ENCODE measurements at regions of chr17 and their contacts with region 1.

Region 1: GRCh38 chr17:31015639-31016038 is 44.8 kb downstream of the RNF135 start:
- DNase-seq: no peak
- H3K4me3 Mint-ChIP-seq: no peak overlapping the region
- H3K27ac Mint-ChIP-seq: no peak overlapping the region
- H3K4me1 Mint-ChIP-seq: no peaks in the 10 kb centered on the region
- H3K27me3 Mint-ChIP-seq: no peaks in the 10 kb centered on the region

Region 2: GRCh38 chr17:31216053-31216751 is 200.6 kb after region 1 on chr17:
- CTCF ChIA-PET with region 1: interaction called, 11 read pairs
- POLR2A ChIA-PET with region 1: no interaction called
- intact Hi-C with region 1: loop called (anchors 2 kb)
- DNase-seq: no peak
- H3K4me3 Mint-ChIP-seq: no peak overlapping the region
- H3K27ac Mint-ChIP-seq: no peak overlapping the region
- H3K4me1 Mint-ChIP-seq: no peaks in the 10 kb centered on the region
- H3K27me3 Mint-ChIP-seq: no peaks in the 10 kb centered on the region

Measured in activated CD4-positive, alpha-beta memory T cell treated with anti-CD3 and anti-CD28 coated beads for 36 hours (primary cell).